ENCODE measurements at regions of chr17 and their contacts with region 1.

Region 1: DNA sequence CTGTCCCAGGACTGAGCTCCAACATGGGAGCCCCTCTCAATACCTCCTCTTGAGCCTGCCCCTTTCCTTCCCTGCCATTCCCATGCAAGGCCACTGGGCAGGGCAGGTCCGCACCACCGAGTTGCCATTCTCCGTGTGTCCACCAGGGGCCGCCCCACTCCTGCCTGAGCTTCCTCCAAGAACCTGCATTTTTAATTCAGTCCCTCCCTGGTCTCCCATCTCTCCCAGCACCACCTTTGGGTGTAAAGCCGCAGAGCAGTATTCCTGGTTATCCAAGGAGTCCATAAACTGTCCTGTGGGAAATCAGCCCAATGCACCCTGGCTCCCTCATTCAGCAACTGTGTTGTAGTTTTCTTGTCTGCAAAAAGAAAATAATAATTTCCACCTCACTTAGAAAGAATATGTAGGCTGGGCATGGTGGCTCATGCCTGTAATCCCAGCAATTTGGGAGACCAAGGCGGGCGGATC is 15.9 kb upstream of the ANKRD40CL start:
- DNase-seq: peak; percentile 98 to 100
- H3K4me3 ChIP-seq: no peak overlapping the region
- H3K4me3 Mint-ChIP-seq: no peak overlapping the region
- H3K27ac Mint-ChIP-seq: no peak overlapping the region
- H3K4me1 ChIP-seq: no peaks in the 10 kb centered on the region
- H3K4me1 Mint-ChIP-seq: peaks cover 11% of the 10 kb centered on the region
- H3K27me3 ChIP-seq: no peaks in the 10 kb centered on the region
- H3K27me3 Mint-ChIP-seq: no peaks in the 10 kb centered on the region
- CTCF ChIP-seq: peak; percentile 100

Region 2: GRCh38 chr17:50547035-50547735 is 236.0 kb before region 1 on chr17 and contains the start of gene SPATA20:
- CTCF ChIA-PET with region 1: interaction called, 5 read pairs
- POLR2A ChIA-PET with region 1: interaction called, 3 read pairs
- intact Hi-C with region 1: loop called (anchors 10 kb)
- DNase-seq: peak; percentile 99
- H3K4me3 ChIP-seq: peak within 1 kb of the TSS; percentile 57
- H3K4me3 Mint-ChIP-seq: peak within 1 kb of the TSS; percentile 80
- H3K27ac Mint-ChIP-seq: peak within 1 kb of the TSS; percentile 72
- H3K4me1 ChIP-seq: peaks cover 38% of the 10 kb centered on the region
- H3K4me1 Mint-ChIP-seq: peaks cover 43% of the 10 kb centered on the region
- H3K27me3 ChIP-seq: no peaks in the 10 kb centered on the region
- H3K27me3 Mint-ChIP-seq: no peaks in the 10 kb centered on the region
- CTCF ChIP-seq: peak; percentile 100
- total RNA-seq, gene SPATA20: 149 and 176 TPM in 2 replicates

Region 3: DNA sequence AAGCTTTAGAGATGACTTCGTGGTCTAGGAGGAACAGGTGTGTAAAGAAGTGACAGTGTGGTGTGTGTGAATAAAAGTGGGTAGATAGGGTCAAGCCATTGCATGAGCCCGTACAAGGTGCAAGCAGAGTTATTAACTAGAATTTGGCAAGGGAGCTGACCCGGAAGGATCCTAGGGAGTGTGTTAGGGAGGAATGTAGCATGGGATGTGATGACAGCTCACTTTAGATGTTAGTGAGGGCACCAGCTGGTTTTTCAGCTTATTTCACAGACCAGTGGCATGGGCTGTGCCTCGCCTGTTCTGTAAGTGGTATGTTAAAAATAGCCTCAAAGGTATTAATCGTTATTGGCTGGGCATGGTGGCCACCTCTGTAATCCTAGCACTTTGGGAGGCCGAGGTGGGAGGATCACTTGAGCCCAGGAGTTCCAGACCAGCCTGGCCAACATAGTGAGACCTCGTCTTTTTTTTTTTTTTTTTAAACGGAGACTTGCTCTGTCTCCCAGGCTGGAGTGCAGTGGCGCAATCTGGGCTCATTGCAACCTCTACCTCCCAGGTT is 24.2 kb before region 1 on chr17:
- CTCF ChIA-PET with region 1: interaction called, 49 read pairs
- POLR2A ChIA-PET with region 1: interaction called, 7 read pairs
- intact Hi-C with region 1: loop called (anchors 2 kb)
- DNase-seq: peak in 1 of 2 experiments; percentile 40
- H3K4me3 ChIP-seq: no peak overlapping the region
- H3K4me3 Mint-ChIP-seq: no peak overlapping the region
- H3K27ac Mint-ChIP-seq: no peak overlapping the region
- H3K4me1 ChIP-seq: peaks cover 23% of the 10 kb centered on the region
- H3K4me1 Mint-ChIP-seq: peaks cover 27% of the 10 kb centered on the region
- H3K27me3 ChIP-seq: no peaks in the 10 kb centered on the region
- H3K27me3 Mint-ChIP-seq: no peaks in the 10 kb centered on the region
- CTCF ChIP-seq: no peak

Region 4: DNA sequence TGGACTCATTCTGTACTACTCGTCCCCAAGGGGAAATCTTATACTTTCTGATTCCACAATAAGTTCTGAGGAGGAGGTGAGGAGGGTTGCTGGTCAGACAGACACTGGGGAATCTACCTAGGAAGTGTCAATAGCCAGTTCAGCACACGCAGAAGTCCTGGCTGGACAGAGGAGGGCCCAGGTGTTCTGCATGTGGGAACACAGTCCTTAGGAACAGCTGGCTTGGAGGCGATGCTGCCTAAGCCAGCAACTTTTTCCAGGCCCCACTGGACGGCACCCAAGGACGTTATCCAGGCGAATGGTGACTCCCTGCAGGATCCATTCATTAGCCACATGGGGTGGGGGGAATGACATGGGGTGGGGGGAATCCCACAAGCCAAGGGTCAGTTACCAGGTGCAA is 22.3 kb after region 1 on chr17:
- CTCF ChIA-PET with region 1: interaction called, 30 read pairs
- POLR2A ChIA-PET with region 1: no interaction called
- intact Hi-C with region 1: no loop called
- DNase-seq: no peak
- H3K4me3 ChIP-seq: no peak overlapping the region
- H3K4me3 Mint-ChIP-seq: no peak overlapping the region
- H3K27ac Mint-ChIP-seq: no peak overlapping the region
- H3K4me1 ChIP-seq: peaks cover 6% of the 10 kb centered on the region; the same call in 1 of the 2 replicates
- H3K4me1 Mint-ChIP-seq: peaks cover 10% of the 10 kb centered on the region
- H3K27me3 ChIP-seq: no peaks in the 10 kb centered on the region
- H3K27me3 Mint-ChIP-seq: no peaks in the 10 kb centered on the region
- CTCF ChIP-seq: no peak

Region 5: DNA sequence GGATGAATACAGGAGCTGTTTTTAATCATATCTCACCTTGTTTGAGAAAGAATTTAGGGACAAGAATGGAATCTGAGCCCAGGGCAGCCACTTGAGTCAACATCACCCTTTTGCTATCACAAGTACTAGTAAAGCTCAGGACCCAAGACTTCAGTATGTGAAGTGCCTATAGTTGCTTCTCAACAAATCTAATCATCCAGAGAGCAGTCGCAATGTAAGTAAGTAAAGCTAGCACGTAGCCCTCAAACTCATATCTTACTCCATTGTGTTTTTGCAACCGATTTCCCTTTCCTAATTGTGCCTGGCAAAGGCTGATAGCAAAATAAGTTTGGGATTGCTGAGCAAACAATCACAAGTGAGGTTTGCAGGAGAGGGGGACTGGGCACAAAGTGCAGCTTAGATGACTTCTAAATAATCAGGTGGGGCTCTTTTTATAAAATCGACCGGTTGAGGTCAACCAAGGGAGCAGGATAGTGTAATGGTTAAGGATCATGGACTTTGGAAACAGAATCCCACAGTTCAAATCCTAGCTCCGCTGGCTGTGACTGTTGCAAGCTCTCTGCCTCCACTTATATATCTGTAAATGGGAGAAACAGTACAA is 69.9 kb after region 1 on chr17:
- CTCF ChIA-PET with region 1: interaction called, 247 read pairs
- POLR2A ChIA-PET with region 1: no interaction called
- intact Hi-C with region 1: no loop called
- DNase-seq: peak; percentile 36 to 39
- H3K4me3 ChIP-seq: no peak overlapping the region
- H3K4me3 Mint-ChIP-seq: peak overlapping the region; percentile 64
- H3K27ac Mint-ChIP-seq: peak overlapping the region; percentile 74
- H3K4me1 ChIP-seq: peaks cover 25% of the 10 kb centered on the region
- H3K4me1 Mint-ChIP-seq: peaks cover 30% of the 10 kb centered on the region
- H3K27me3 ChIP-seq: no peaks in the 10 kb centered on the region
- H3K27me3 Mint-ChIP-seq: no peaks in the 10 kb centered on the region
- CTCF ChIP-seq: no peak

Region 6: GRCh38 chr17:50956750-50957523 is 173.7 kb after region 1 on chr17:
- CTCF ChIA-PET with region 1: interaction called, 22 read pairs
- POLR2A ChIA-PET with region 1: no interaction called
- intact Hi-C with region 1: loop called (anchors 1 kb)
- DNase-seq: peak; percentile 86 to 87
- H3K4me3 ChIP-seq: no peak overlapping the region
- H3K4me3 Mint-ChIP-seq: no peak overlapping the region
- H3K27ac Mint-ChIP-seq: no peak overlapping the region
- H3K4me1 ChIP-seq: peaks cover 9% of the 10 kb centered on the region
- H3K4me1 Mint-ChIP-seq: peaks cover 13% of the 10 kb centered on the region
- H3K27me3 ChIP-seq: no peaks in the 10 kb centered on the region
- H3K27me3 Mint-ChIP-seq: no peaks in the 10 kb centered on the region
- CTCF ChIP-seq: peak; percentile 96 to 98

Measured in Caco-2 (cell line).